ENCODE measurements at regions of chr19 and their contacts with region 1.

Region 1: GRCh38 chr19:56252699-56253422 is 19.7 kb upstream of the EDDM13 start:
- DNase-seq: peak; percentile 90
- ATAC-seq: peak; percentile 85
- H3K4me3 Mint-ChIP-seq: no peak overlapping the region
- H3K27ac Mint-ChIP-seq: no peak overlapping the region
- H3K4me1 Mint-ChIP-seq: peaks cover 3% of the 10 kb centered on the region
- H3K27me3 Mint-ChIP-seq: no peaks in the 10 kb centered on the region

Region 2: DNA sequence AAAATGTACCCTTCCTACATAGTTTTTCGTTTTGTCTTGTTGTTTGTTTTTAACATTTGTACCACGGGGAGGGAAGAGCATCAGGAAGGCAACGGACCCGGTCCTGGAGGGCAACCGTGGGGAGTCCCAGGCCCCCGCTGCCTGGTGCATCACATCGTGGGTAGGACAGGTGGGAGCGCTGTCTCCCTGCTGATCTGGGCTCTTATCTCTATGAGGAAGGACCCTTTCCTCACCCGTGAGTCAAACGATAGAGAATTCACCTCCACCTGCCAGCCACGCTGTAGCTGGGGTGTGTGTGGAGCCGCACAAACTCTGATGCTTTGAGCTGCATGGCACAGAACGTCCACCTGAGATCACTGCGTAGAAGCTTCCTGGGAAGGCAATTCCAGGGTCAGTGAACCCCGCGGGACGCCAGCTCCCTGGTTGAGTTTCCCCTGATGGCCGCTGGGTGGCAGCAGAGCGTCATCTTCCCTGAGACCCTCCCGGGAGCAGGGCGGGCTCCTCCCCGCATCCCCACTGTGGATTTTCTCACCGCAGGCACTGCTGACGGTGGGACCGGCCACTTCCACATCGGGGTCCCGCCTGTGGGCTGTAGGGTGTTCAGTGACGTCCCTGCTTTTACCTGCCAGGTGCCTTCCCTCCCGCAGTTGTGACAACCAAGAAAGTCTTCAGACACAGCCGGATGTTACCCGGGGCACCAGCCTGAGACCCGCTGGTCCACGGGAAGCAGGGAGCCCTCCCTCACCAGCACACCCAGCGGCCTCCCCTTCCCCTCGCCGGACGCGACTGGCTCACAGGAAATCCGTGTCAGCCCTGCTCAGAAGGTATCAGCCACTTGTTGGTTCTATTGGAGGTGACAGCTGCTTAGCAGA is 186.5 kb before region 1 on chr19:
- CTCF ChIA-PET with region 1: interaction called, 36 read pairs
- POLR2A ChIA-PET with region 1: no interaction called
- intact Hi-C with region 1: loop called (anchors 1 to 2 kb)
- DNase-seq: peak; percentile 75
- ATAC-seq: peak; percentile 69
- H3K4me3 Mint-ChIP-seq: peak overlapping the region; percentile 50
- H3K27ac Mint-ChIP-seq: no peak overlapping the region
- H3K4me1 Mint-ChIP-seq: peaks cover 11% of the 10 kb centered on the region
- H3K27me3 Mint-ChIP-seq: peaks cover 16% of the 10 kb centered on the region

Region 3: DNA sequence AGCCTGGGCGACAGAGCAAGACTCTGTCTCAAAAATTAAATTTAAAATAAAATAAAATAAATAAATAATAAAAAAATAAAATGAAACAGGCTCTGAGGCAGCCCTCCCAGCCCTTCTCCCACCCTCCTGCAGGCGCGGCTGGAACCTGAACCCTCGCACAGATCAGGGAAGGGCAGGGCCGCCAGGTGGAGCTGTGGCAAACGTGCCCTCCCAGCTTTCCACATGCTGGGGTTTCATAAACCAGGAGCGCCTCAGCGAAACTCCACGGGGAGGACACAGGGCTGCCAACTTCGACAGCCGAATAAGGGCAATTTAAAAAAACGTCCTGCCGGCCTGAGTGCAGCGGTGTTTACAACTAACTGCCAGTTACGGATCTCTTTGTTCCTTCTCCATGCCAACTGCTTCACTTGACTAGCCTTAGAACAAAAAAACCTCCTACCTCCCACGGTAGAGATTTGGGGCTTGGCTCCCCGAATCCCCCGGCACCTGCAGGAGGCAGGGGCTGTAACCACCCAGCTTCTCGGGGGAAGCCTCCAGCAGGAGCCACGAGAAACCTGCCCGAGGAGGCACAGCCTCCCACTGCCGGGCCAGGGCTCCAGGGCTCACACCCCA is 147.7 kb before region 1 on chr19:
- CTCF ChIA-PET with region 1: interaction called, 10 read pairs
- POLR2A ChIA-PET with region 1: no interaction called
- intact Hi-C with region 1: no loop called
- DNase-seq: peak; percentile 74
- ATAC-seq: peak; percentile 82
- H3K4me3 Mint-ChIP-seq: no peak overlapping the region
- H3K27ac Mint-ChIP-seq: peak overlapping the region; percentile 25
- H3K4me1 Mint-ChIP-seq: peaks cover 27% of the 10 kb centered on the region
- H3K27me3 Mint-ChIP-seq: no peaks in the 10 kb centered on the region

Region 4: GRCh38 chr19:56266051-56266450 is 13.2 kb after region 1 on chr19:
- CTCF ChIA-PET with region 1: interaction called, 27 read pairs
- POLR2A ChIA-PET with region 1: no interaction called
- intact Hi-C with region 1: no loop called
- DNase-seq: no peak
- ATAC-seq: no peak
- H3K4me3 Mint-ChIP-seq: no peak overlapping the region
- H3K27ac Mint-ChIP-seq: no peak overlapping the region
- H3K4me1 Mint-ChIP-seq: peaks cover 3% of the 10 kb centered on the region
- H3K27me3 Mint-ChIP-seq: no peaks in the 10 kb centered on the region

Region 5: DNA sequence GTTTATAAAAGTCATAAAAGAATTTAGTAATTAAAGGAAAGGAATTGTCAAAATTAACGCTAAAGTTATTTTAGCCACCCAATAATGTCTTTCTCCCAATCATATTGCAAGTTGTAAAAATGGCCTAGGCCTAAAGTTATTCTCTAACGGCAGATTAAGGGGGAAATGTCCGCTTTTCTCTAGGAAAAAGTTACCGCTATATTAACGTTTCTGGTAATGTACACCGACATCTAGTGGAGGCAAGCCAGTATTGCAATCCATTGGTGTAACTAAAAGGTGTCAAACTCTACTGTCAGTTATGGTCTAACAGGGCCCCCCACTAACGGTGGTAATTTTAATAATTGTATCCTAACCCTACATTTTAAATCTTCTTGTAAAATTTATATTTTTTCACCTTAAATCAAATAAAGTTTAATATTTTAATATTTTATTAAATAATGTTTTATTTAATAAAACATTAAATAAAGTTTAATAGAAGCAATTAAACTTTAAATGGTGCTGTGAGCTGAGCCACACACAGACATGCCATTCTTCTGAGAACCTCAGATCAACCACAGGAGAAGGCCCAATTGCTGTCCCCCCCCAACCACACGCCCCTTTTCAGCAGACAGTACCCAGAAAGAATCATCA is 97.7 kb after region 1 on chr19:
- CTCF ChIA-PET with region 1: interaction called, 20 read pairs
- POLR2A ChIA-PET with region 1: no interaction called
- intact Hi-C with region 1: loop called (anchors 1 to 5 kb)
- DNase-seq: peak; percentile 69
- ATAC-seq: peak; percentile 44
- H3K4me3 Mint-ChIP-seq: no peak overlapping the region
- H3K27ac Mint-ChIP-seq: no peak overlapping the region
- H3K4me1 Mint-ChIP-seq: no peaks in the 10 kb centered on the region
- H3K27me3 Mint-ChIP-seq: no peaks in the 10 kb centered on the region